A549 (cell line): ENCODE measurements at regions of chr4 and their contacts with region 1.

Region 1: GRCh38 chr4:159178151-159178546 is 75.3 kb downstream of the RAPGEF2 start:
- DNase-seq: no peak
- ATAC-seq: no peak
- H3K4me3 ChIP-seq: no peak overlapping the region
- H3K27ac ChIP-seq: peak overlapping the region in 1 of 2 experiments; percentile 13; a peak in 3 of 6 replicates
- H3K4me1 ChIP-seq: peaks cover 52% of the 10 kb centered on the region
- CTCF ChIP-seq: no peak
- EP300 ChIP-seq: no peak
- POLR2A ChIP-seq: no peak
- RAD21 ChIP-seq: no peak

Region 2: DNA sequence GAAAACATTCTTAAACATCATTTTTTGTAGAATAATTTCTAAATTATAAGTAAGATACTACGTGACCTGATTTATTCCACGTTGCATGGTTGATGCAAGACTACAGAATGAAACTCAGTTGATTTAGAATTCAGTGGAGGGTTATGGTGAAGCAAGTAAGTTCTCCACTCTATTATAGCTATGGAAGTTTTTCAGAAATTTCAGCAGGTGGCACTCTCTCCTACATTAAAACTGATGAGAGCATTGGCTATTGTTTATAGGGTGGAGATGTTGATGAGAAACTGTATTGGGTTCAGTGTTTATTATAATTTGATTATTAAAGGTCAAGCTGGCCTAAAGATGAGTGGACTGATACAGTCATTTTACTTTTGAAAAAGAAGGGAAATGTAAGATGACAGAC is 321.3 kb before region 1 on chr4:
- CTCF ChIA-PET with region 1: interaction called, 11 read pairs
- POLR2A ChIA-PET with region 1: no interaction called
- DNase-seq: peak in 1 of 2 experiments; percentile 40
- ATAC-seq: peak; percentile 83 to 88; a peak in 5 of 6 replicates
- H3K4me3 ChIP-seq: no peak overlapping the region
- H3K27ac ChIP-seq: no peak overlapping the region
- H3K4me1 ChIP-seq: peaks cover 31% of the 10 kb centered on the region; the same call in 2 of the 3 replicates
- CTCF ChIP-seq: peak; percentile 63
- EP300 ChIP-seq: no peak
- POLR2A ChIP-seq: no peak
- RAD21 ChIP-seq: peak; percentile 77 to 84

Region 3: GRCh38 chr4:159455675-159456237 is 277.6 kb after region 1 on chr4:
- CTCF ChIA-PET with region 1: no interaction called
- POLR2A ChIA-PET with region 1: no interaction called
- DNase-seq: peak; percentile 49 to 51
- ATAC-seq: peak; percentile 74 to 84; a peak in 5 of 6 replicates
- H3K4me3 ChIP-seq: peak overlapping the region; percentile 33; the same call in 1 of the 3 replicates
- H3K27ac ChIP-seq: no peak overlapping the region
- H3K4me1 ChIP-seq: no peaks in the 10 kb centered on the region
- CTCF ChIP-seq: peak; percentile 49
- EP300 ChIP-seq: no peak
- POLR2A ChIP-seq: no peak
- RAD21 ChIP-seq: peak; percentile 47 to 60; a peak in 4 of 5 replicates